ENCODE measurements at regions of chr2 and their contacts with region 1.

Region 1: GRCh38 chr2:112996635-112997034 is 8.6 kb upstream of the IL36A start:
- DNase-seq: peak; percentile 83 to 92 (median 85)
- H3K4me3 ChIP-seq: peak overlapping the region in 1 of 2 donors; percentile 13
- H3K4me3 Mint-ChIP-seq: peak overlapping the region; percentile 5 to 85 (median 68)
- H3K27ac ChIP-seq: peak overlapping the region; percentile 42
- H3K27ac Mint-ChIP-seq: peak overlapping the region; percentile 82 to 95 (median 92)
- H3K4me1 ChIP-seq: peaks cover 41% of the 10 kb centered on the region
- H3K4me1 Mint-ChIP-seq: peaks cover 30 to 47% (median 38%) of the 10 kb centered on the region in 4 donors
- H3K27me3 ChIP-seq: no peaks in the 10 kb centered on the region
- H3K27me3 Mint-ChIP-seq: peaks cover 0 to 1% of the 10 kb centered on the region in 2 donors

Region 2: GRCh38 chr2:112317303-112318158 is 679.1 kb before region 1 on chr2:
- CTCF ChIA-PET with region 1: no interaction called
- POLR2A ChIA-PET with region 1: no interaction called
- intact Hi-C with region 1: no loop called
- DNase-seq: no peak
- H3K4me3 ChIP-seq: no peak overlapping the region
- H3K4me3 Mint-ChIP-seq: no peak overlapping the region
- H3K27ac ChIP-seq: no peak overlapping the region
- H3K27ac Mint-ChIP-seq: no peak overlapping the region
- H3K4me1 ChIP-seq: no peaks in the 10 kb centered on the region
- H3K4me1 Mint-ChIP-seq: no peaks in the 10 kb centered on the region
- H3K27me3 ChIP-seq: no peaks in the 10 kb centered on the region
- H3K27me3 Mint-ChIP-seq: no peaks in the 10 kb centered on the region

Region 3: DNA sequence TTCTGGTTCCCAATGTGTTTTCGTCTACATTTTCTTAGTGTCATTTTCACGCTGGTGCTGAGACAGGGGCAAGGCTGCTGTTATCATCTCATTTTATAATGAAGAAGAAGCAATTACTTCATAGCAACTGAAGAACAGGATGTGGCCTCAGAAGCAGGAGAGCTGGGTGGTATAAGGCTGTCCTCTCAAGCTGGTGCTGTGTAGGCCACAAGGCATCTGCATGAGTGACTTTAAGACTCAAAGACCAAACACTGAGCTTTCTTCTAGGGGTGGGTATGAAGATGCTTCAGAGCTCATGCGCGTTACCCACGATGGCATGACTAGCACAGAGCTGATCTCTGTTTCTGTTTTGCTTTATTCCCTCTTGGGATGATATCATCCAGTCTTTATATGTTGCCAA is 11.5 kb before region 1 on chr2:
- CTCF ChIA-PET with region 1: interaction called, 3 read pairs
- POLR2A ChIA-PET with region 1: interaction called, 4 read pairs
- intact Hi-C with region 1: loop called (anchors 1 kb)
- DNase-seq: peak in 4 of 5 donors; percentile 9 to 30 (median 18)
- H3K4me3 ChIP-seq: no peak overlapping the region
- H3K4me3 Mint-ChIP-seq: no peak overlapping the region
- H3K27ac ChIP-seq: no peak overlapping the region
- H3K27ac Mint-ChIP-seq: peak overlapping the region in 5 of 7 donors; percentile 4 to 71 (median 26)
- H3K4me1 ChIP-seq: peaks cover 18% of the 10 kb centered on the region
- H3K4me1 Mint-ChIP-seq: peaks cover 15 to 21% (median 19%) of the 10 kb centered on the region in 4 donors
- H3K27me3 ChIP-seq: no peaks in the 10 kb centered on the region
- H3K27me3 Mint-ChIP-seq: no peaks in the 10 kb centered on the region

Region 4: GRCh38 chr2:113015646-113016045 is 19.0 kb after region 1 on chr2:
- CTCF ChIA-PET with region 1: no interaction called
- POLR2A ChIA-PET with region 1: no interaction called
- intact Hi-C with region 1: no loop called
- DNase-seq: no peak
- H3K4me3 ChIP-seq: no peak overlapping the region
- H3K4me3 Mint-ChIP-seq: no peak overlapping the region
- H3K27ac ChIP-seq: no peak overlapping the region
- H3K27ac Mint-ChIP-seq: no peak overlapping the region
- H3K4me1 ChIP-seq: peaks cover 4% of the 10 kb centered on the region
- H3K4me1 Mint-ChIP-seq: peaks cover 0 to 11% (median under 1%) of the 10 kb centered on the region in 4 donors
- H3K27me3 ChIP-seq: no peaks in the 10 kb centered on the region
- H3K27me3 Mint-ChIP-seq: peaks cover 10 to 24% of the 10 kb centered on the region in 2 donors

Region 5: DNA sequence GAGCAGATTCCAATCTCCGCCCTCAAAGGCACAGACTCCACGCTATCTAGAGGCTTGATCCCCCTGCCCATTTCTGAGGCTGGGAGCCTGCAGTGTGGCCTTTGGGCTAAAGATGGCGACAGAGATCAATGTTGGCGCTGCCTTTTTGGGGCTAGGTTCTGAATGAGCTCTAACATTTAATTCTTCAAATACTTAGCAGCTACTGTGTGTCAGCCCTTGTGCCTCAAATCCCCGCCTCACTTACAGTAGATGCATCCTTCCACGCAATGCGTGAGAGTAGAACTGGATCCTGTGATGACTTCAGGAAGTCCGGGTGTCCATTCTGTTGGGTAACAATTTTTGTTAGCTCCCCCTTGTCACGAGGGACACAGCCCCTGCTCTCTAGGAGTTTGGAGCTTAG is 83.5 kb after region 1 on chr2:
- CTCF ChIA-PET with region 1: no interaction called
- POLR2A ChIA-PET with region 1: no interaction called
- intact Hi-C with region 1: loop called (anchors 5 kb)
- DNase-seq: peak; percentile 15 to 44 (median 18)
- H3K4me3 ChIP-seq: no peak overlapping the region
- H3K4me3 Mint-ChIP-seq: no peak overlapping the region
- H3K27ac ChIP-seq: no peak overlapping the region
- H3K27ac Mint-ChIP-seq: no peak overlapping the region
- H3K4me1 ChIP-seq: no peaks in the 10 kb centered on the region
- H3K4me1 Mint-ChIP-seq: peaks cover 0 to 2% (median under 1%) of the 10 kb centered on the region in 4 donors
- H3K27me3 ChIP-seq: no peaks in the 10 kb centered on the region
- H3K27me3 Mint-ChIP-seq: peaks cover 4 to 13% of the 10 kb centered on the region in 2 donors

Region 6: DNA sequence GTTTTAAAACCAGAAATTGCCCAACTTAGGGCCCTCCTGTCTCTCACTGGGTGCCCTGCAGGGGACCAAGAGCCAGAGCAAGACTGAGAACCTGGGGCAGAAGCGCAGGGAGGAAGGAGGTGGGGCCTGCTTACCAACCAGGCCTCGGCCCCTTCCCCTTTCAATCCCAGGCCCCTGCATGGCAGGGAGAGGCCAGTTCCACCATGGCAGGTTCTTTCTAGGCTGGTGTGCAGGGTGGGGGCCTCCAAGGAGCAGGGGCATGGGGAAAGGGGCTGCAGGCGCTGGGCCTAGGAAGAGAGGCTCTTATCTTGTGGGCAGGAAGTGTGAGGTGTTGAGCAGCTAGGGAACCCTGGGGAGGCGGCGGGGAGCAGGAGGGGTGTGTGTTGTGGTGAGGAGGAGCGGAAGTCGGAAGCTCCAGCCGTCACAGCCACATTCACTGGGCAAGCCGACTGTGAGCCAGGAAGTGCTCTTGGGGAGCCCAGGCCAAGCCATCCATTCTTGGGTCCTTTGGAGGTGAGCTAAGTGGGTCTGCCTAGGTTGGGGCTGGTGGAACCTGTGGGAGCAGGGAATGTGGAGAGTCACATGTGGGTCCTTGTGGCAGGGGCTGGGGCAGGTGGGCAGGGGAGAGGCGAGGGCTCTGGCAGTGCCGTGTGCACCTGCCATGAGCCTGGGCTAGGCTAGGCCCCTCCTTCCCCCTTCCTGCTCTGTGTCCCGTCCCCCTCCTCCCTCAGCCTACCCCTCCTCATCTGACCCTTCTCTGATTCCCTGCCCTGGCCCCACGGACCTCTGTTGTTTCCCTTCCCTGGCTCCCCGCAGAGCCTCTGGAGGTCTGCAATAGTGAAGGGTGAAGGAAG is 177.1 kb after region 1 on chr2 and contains the start of gene PSD4:
- CTCF ChIA-PET with region 1: no interaction called
- POLR2A ChIA-PET with region 1: interaction called, 10 read pairs
- intact Hi-C with region 1: no loop called
- DNase-seq: peak; percentile 89 to 94 (median 91)
- H3K4me3 ChIP-seq: peak within 1 kb of the TSS; percentile 81 to 82
- H3K4me3 Mint-ChIP-seq: peak within 1 kb of the TSS; percentile 88 to 99 (median 94)
- H3K27ac ChIP-seq: peak within 1 kb of the TSS; percentile 85
- H3K27ac Mint-ChIP-seq: peak within 1 kb of the TSS; percentile 92 to 100 (median 96)
- H3K4me1 ChIP-seq: peaks cover 80% of the 10 kb centered on the region
- H3K4me1 Mint-ChIP-seq: peaks cover 56 to 89% (median 71%) of the 10 kb centered on the region in 4 donors
- H3K27me3 ChIP-seq: no peaks in the 10 kb centered on the region
- H3K27me3 Mint-ChIP-seq: peaks cover 2% of the 10 kb centered on the region in 2 donors
- total RNA-seq, gene PSD4: 100.0 to 101 TPM